AG04449 (cell line): ENCODE measurements at regions of chr19 and their contacts with region 1.

Region 1: GRCh38 chr19:16382775-16383543 is 58.3 kb downstream of the KLF2 start:
- DNase-seq: peak; percentile 33
- H3K4me3 ChIP-seq: no peak overlapping the region
- CTCF ChIP-seq: peak; percentile 91

Region 2: GRCh38 chr19:16252459-16253205 is 130.3 kb before region 1 on chr19:
- CTCF ChIA-PET with region 1: interaction called, 352 read pairs
- POLR2A ChIA-PET with region 1: no interaction called
- DNase-seq: no peak
- H3K4me3 ChIP-seq: no peak overlapping the region
- CTCF ChIP-seq: no peak

Region 3: DNA sequence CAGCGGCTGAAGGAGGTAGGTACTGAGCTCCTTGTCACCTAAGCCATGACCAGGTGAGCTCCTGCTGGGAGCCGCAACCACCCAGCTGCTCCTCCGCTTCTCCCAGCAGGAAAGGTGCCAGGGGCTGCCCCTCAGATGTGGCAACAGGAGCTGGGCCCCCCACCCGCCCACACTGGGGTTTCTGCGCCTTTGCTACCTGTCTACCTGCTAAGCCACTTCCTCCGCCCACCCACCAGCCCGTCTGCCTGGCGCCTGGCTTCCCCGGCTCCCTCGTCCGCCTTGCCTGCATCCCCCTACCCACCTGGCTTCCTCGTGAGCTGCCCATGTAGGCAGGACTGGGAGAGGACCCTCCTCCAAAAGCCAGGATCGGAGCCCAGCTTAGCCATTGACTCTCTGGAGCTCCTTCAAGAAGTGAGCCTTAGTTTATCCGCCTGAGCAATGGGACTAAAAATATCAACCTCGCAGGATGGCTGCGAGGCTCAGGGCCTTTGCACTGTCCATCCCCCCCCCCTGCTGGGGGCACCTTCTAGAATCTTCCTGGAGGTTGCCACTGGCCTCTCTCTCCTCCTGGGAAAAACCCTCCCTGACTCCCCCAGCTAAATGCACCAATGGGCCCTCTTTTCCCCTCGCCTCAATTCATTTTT is 114.2 kb before region 1 on chr19:
- CTCF ChIA-PET with region 1: interaction called, 15 read pairs
- POLR2A ChIA-PET with region 1: no interaction called
- DNase-seq: no peak
- H3K4me3 ChIP-seq: no peak overlapping the region
- CTCF ChIP-seq: no peak

Region 4: GRCh38 chr19:16361254-16361653 is 21.7 kb before region 1 on chr19:
- CTCF ChIA-PET with region 1: interaction called, 13 read pairs
- POLR2A ChIA-PET with region 1: no interaction called
- DNase-seq: no peak
- H3K4me3 ChIP-seq: no peak overlapping the region
- CTCF ChIP-seq: no peak

Region 5: DNA sequence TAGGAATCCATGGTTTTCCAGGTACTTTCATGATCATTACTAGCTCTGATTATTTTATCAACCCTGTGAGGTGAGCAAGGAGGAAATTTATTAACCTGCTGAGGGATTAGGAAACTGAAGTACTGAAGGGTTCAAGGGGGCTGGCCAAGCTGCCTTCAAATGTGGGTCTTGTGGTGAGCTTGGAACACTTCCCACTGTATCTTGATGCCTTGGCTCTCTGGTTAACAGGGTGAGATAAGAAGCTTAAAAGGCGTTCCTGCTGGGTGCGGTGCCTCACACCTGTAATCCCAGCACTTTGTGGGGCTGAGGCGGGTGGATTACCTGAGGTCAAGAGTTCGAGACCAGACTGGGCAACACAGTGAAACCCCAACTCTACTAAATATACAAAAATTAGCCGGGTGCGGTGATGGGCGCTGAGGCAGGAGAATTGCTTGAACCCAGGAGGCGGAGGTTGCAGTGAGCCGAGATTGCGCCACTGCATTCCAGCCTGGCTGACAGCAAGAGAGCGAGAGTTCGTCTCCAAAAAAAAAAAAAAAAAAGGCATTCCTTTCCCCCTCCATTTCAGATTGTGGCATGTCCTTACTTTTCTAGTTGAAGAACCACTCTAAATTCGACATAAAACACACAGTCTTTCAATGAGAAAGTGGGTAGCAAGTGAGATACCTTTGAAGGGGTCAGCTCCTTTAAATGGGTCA is 11.9 kb after region 1 on chr19:
- CTCF ChIA-PET with region 1: interaction called, 30 read pairs
- POLR2A ChIA-PET with region 1: no interaction called
- DNase-seq: no peak
- H3K4me3 ChIP-seq: no peak overlapping the region
- CTCF ChIP-seq: no peak

Region 6: DNA sequence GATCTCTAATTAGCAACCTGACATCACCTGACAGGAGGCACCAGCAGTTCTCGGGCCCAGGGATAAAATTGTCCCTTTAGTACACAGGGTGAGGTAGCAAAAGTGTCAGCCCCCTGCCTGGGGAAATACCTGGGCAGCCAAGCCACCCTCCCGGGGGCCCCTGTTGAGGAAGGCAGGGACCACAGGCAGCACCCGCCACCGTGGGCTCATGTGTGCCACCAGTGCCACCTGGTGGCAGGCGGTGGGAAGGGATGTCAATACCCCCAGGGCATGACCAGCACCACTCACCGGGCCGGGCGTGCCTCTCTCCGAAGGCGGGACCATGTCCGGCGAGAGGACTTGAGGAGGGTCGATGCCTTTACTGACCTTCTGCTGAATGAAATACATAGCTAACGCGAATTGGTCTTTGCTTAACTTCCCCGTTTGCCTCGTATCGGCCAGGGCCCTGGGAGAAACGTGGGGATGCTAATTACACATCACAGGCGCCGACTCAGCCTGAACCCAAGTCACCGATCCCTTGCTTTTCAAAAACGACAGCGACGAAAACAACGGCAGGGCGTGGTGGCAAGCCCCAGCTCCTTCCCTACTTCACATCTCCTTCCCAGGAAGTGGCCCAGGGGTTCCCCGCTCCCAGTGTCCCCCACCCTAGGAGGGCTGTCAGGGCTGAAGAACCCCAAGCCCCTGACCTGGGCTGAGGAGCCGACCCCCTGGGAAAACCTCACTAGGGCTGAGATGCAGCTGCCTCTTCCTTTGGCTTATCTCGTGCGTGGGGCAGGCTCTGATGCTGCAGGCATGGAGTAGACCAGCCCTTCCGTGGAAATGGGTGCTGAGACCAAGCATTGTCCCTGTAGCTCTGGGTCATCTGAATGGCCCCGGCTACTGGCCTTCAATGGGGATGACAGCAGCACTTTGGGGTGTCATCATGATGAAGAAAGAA is 35.0 kb after region 1 on chr19:
- CTCF ChIA-PET with region 1: interaction called, 12 read pairs
- POLR2A ChIA-PET with region 1: no interaction called
- DNase-seq: no peak
- H3K4me3 ChIP-seq: no peak overlapping the region
- CTCF ChIP-seq: peak; percentile 87

Region 7: GRCh38 chr19:16429066-16429758 is 46.3 kb after region 1 on chr19:
- CTCF ChIA-PET with region 1: no interaction called
- POLR2A ChIA-PET with region 1: no interaction called
- DNase-seq: no peak
- H3K4me3 ChIP-seq: no peak overlapping the region
- CTCF ChIP-seq: no peak